Activated CD4-positive, alpha-beta T cell treated with anti-CD3 and anti-CD28 coated beads for 36 hours (primary cell): ENCODE measurements at regions of chr2 and their contacts with region 1.

Region 1: DNA sequence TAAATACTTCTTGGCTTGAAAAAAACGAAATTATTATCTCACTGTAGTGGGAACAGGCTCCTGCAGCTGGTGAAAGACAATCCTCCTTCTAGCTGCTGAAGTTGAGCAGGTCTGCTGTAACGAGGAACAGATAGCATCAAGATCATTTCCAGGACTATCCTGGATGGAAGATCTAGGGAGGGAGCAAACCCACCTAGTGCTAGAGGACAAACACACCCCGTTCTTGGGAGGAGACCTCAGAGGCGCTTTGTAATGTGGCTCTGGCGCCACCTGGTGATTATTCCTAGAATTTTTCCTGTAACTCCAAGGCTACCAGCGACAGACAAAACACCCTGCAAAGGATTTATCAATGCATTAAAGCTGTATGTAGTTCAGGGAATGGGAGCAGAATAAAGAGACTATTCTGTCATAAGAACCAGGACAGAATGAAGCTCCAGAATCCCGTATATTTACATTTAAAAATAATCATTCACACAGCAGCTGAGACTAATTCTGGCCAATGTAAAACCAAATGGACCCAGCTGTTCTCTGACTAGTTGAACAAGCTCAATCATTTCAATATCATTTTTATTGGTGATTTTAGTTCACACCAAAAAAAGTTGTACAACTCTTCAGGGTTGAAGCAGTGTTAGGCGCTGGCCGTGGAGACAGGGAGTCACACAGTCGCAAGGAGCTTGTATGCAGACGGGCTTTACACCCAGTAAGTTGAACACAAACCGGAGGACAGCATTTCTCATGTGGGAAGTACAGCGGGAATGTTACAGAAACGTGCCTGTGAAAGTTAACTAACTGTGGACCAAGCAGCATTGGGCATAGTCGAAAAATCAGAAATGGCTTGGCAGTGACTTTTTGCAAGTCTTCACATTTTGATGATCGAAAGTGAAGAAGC is 290.3 kb downstream of the TRIB2 start:
- DNase-seq: peak; percentile 74
- ATAC-seq: peak; percentile 63
- H3K4me3 Mint-ChIP-seq: no peak overlapping the region
- H3K27ac Mint-ChIP-seq: no peak overlapping the region
- H3K4me1 Mint-ChIP-seq: peaks cover 3% of the 10 kb centered on the region
- H3K27me3 Mint-ChIP-seq: peaks cover 11% of the 10 kb centered on the region

Region 2: GRCh38 chr2:11688222-11689069 is 1318.6 kb before region 1 on chr2:
- CTCF ChIA-PET with region 1: no interaction called
- POLR2A ChIA-PET with region 1: no interaction called
- intact Hi-C with region 1: loop called in 1 of 2 experiments (anchors 5 kb)
- DNase-seq: peak; percentile 92
- ATAC-seq: peak; percentile 95
- H3K4me3 Mint-ChIP-seq: no peak overlapping the region
- H3K27ac Mint-ChIP-seq: no peak overlapping the region
- H3K4me1 Mint-ChIP-seq: peaks cover 9% of the 10 kb centered on the region
- H3K27me3 Mint-ChIP-seq: peaks cover 5% of the 10 kb centered on the region

Region 3: GRCh38 chr2:12127638-12128037 is 879.4 kb before region 1 on chr2:
- CTCF ChIA-PET with region 1: no interaction called
- POLR2A ChIA-PET with region 1: no interaction called
- intact Hi-C with region 1: loop called in 1 of 2 experiments (anchors 5 kb)
- DNase-seq: no peak
- ATAC-seq: peak; percentile 92
- H3K4me3 Mint-ChIP-seq: no peak overlapping the region
- H3K27ac Mint-ChIP-seq: peak overlapping the region; percentile 75
- H3K4me1 Mint-ChIP-seq: peaks cover 2% of the 10 kb centered on the region
- H3K27me3 Mint-ChIP-seq: no peaks in the 10 kb centered on the region

Region 4: DNA sequence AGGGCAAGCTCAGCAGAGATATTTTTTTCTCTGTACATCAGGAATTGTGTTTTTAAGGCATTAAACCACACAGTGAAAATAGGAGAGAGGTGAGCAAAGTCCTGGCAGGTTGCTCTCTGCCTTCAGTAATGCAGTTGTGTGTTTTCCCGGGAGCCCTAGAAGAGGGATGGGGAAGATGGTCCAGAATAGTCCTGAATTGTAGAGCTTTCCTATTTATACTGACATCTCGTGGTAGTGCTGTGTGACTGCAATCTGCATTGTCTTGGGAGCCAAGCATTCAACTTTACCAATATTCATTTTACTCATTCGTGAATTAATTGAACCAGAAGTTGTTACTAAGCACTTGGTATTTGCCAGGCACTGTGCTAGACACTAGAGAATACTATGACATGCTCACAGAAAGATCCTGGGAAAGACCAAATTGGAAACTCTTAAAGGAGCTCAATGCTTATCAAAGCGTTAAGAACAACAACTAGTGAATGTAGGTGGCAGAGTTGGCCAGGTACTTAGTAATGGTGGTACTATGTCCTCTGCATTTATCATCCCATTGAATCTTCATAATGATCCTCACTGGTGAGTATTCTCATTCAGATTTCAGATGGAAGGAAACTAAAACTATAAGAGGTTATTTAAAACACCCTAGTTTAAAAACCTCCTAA is 75.8 kb before region 1 on chr2:
- CTCF ChIA-PET with region 1: interaction called, 16 read pairs
- POLR2A ChIA-PET with region 1: no interaction called
- intact Hi-C with region 1: no loop called
- DNase-seq: no peak
- ATAC-seq: no peak
- H3K4me3 Mint-ChIP-seq: no peak overlapping the region
- H3K27ac Mint-ChIP-seq: no peak overlapping the region
- H3K4me1 Mint-ChIP-seq: peaks cover 15% of the 10 kb centered on the region
- H3K27me3 Mint-ChIP-seq: peaks cover 11% of the 10 kb centered on the region

Region 5: GRCh38 chr2:12990523-12990922 is 16.6 kb before region 1 on chr2:
- CTCF ChIA-PET with region 1: interaction called, 25 read pairs
- POLR2A ChIA-PET with region 1: no interaction called
- intact Hi-C with region 1: no loop called
- DNase-seq: no peak
- ATAC-seq: no peak
- H3K4me3 Mint-ChIP-seq: no peak overlapping the region
- H3K27ac Mint-ChIP-seq: no peak overlapping the region
- H3K4me1 Mint-ChIP-seq: peaks cover 3% of the 10 kb centered on the region
- H3K27me3 Mint-ChIP-seq: no peaks in the 10 kb centered on the region

Region 6: GRCh38 chr2:13066676-13067075 is 59.6 kb after region 1 on chr2:
- CTCF ChIA-PET with region 1: no interaction called
- POLR2A ChIA-PET with region 1: no interaction called
- intact Hi-C with region 1: no loop called
- DNase-seq: no peak
- ATAC-seq: no peak
- H3K4me3 Mint-ChIP-seq: no peak overlapping the region
- H3K27ac Mint-ChIP-seq: no peak overlapping the region
- H3K4me1 Mint-ChIP-seq: no peaks in the 10 kb centered on the region
- H3K27me3 Mint-ChIP-seq: peaks cover 16% of the 10 kb centered on the region